ENCODE measurements at regions of chr11 and their contacts with region 1.

Region 1: DNA sequence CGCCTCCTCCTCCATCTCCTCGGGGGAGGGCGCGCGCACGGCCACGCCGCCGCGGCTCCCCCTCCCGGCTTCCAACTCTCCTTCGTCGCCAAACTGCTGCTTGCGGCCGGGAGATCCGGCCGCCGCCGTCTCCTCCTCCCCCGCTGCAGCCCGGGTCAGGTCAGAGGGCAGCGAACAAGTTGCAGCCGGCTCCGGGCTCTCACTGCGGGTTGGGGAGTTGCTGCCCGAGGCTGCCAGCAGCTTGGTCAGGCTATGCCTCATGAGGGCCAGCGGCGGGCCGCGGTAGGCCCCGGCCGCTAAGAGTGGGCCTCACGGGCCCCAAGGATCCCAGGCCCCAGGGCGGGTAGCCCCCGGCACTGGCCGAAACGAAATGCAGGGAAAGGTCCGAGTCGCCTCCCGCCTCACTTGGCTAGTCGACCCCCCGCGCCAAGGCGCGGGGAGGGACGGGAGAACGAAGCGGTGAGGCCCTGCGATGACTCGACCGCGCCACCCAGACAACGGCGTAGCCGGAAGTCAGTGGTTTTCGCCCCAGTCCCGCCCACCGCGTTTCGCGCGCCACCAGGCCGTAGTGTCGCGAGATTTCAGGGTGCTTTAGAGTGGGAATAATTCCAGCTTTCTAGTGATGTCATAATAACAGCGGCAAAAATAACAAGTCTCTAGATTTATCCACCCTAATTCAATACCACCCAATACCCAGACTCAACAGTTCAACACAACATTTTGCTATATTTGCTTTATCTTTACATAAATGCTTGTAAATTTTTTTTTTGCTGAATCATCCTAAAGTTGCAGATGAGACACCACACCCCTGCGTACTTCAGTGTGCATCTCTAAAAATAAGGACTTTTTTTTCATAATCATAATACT is at the start of gene CREBZF:
- DNase-seq: peak; percentile 98
- H3K4me3 Mint-ChIP-seq: peak within 1 kb of the TSS; percentile 98
- H3K27ac Mint-ChIP-seq: peak within 1 kb of the TSS; percentile 96
- H3K4me1 Mint-ChIP-seq: peaks cover 23% of the 10 kb centered on the region
- H3K27me3 Mint-ChIP-seq: no peaks in the 10 kb centered on the region
- total RNA-seq, gene CREBZF: 53.3 to 53.9 TPM

Region 2: GRCh38 chr11:85627998-85628770 is 36.7 kb before region 1 on chr11 and contains the start of gene TMEM126B:
- CTCF ChIA-PET with region 1: interaction called, 4 read pairs
- intact Hi-C with region 1: loop called (anchors 1 kb)
- DNase-seq: peak; percentile 98
- H3K4me3 Mint-ChIP-seq: peak within 1 kb of the TSS; percentile 99
- H3K27ac Mint-ChIP-seq: peak within 1 kb of the TSS; percentile 96
- H3K4me1 Mint-ChIP-seq: peaks cover 33% of the 10 kb centered on the region
- H3K27me3 Mint-ChIP-seq: no peaks in the 10 kb centered on the region
- total RNA-seq, gene TMEM126B: 72.6 to 79.0 TPM

Region 3: GRCh38 chr11:85652786-85653447 is 11.9 kb before region 1 on chr11:
- CTCF ChIA-PET with region 1: interaction called, 3 read pairs
- intact Hi-C with region 1: loop called (anchors 1 kb)
- DNase-seq: no peak
- H3K4me3 Mint-ChIP-seq: no peak overlapping the region
- H3K27ac Mint-ChIP-seq: peak overlapping the region; percentile 9
- H3K4me1 Mint-ChIP-seq: peaks cover 40% of the 10 kb centered on the region
- H3K27me3 Mint-ChIP-seq: no peaks in the 10 kb centered on the region

Region 4: GRCh38 chr11:85699957-85700741 is 35.3 kb after region 1 on chr11:
- CTCF ChIA-PET with region 1: no interaction called
- intact Hi-C with region 1: loop called (anchors 1 kb)
- DNase-seq: no peak
- H3K4me3 Mint-ChIP-seq: no peak overlapping the region
- H3K27ac Mint-ChIP-seq: peak overlapping the region; percentile 36
- H3K4me1 Mint-ChIP-seq: peaks cover 35% of the 10 kb centered on the region
- H3K27me3 Mint-ChIP-seq: no peaks in the 10 kb centered on the region

Region 5: GRCh38 chr11:85810871-85811611 is 146.2 kb after region 1 on chr11 and contains the start of gene SYTL2:
- CTCF ChIA-PET with region 1: interaction called, 3 read pairs
- intact Hi-C with region 1: loop called (anchors 1 kb)
- DNase-seq: peak; percentile 77
- H3K4me3 Mint-ChIP-seq: peak within 1 kb of the TSS; percentile 81
- H3K27ac Mint-ChIP-seq: no peak within 1 kb of the TSS
- H3K4me1 Mint-ChIP-seq: peaks cover 33% of the 10 kb centered on the region
- H3K27me3 Mint-ChIP-seq: no peaks in the 10 kb centered on the region
- total RNA-seq, gene SYTL2: 13.8 to 13.9 TPM

Region 6: GRCh38 chr11:86202013-86202336 is 537.1 kb after region 1 on chr11:
- CTCF ChIA-PET with region 1: no interaction called
- intact Hi-C with region 1: loop called (anchors 1 kb)
- DNase-seq: peak; percentile 42
- H3K4me3 Mint-ChIP-seq: no peak overlapping the region
- H3K27ac Mint-ChIP-seq: no peak overlapping the region
- H3K4me1 Mint-ChIP-seq: no peaks in the 10 kb centered on the region
- H3K27me3 Mint-ChIP-seq: no peaks in the 10 kb centered on the region

Region 7: DNA sequence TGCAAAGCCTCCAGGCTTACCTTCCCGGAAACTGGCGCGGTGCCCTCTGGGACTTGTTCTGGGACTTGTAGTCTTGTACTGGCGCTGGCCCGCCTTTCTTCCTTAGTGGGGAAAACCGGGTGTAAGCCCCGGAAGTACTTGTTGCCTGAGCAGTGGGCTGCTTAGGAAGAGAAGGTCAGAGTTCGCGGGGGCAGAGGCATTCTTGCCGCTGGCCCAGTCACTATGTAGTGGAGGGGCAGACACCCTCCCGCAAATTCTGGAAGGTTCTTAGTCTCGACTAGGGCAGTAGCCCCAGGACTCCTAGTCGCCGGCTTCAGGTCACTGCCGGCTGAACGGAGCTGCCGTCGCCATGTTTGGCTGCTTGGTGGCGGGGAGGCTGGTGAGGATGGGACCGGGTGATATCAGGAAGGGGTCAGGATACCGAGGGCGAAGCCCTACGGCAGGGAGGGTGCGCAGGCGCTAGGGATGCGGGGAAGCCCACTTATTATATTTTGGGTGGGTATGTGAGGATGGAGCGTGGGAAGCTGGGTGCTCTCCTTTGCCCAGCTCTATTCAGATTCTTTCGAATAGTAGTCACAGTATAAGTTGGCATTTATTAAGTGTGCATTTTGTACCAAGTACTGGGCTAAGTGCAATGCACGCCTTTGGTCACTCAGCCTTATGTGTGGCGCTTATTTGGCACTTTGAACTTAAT is 637.4 kb after region 1 on chr11 and contains the start of gene HIKESHI:
- CTCF ChIA-PET with region 1: no interaction called
- intact Hi-C with region 1: loop called (anchors 1 kb)
- DNase-seq: peak; percentile 99
- H3K4me3 Mint-ChIP-seq: peak within 1 kb of the TSS; percentile 99
- H3K27ac Mint-ChIP-seq: peak within 1 kb of the TSS; percentile 94
- H3K4me1 Mint-ChIP-seq: peaks cover 26% of the 10 kb centered on the region
- H3K27me3 Mint-ChIP-seq: no peaks in the 10 kb centered on the region
- total RNA-seq, gene HIKESHI: 40.4 to 41.9 TPM